ENCODE measurements at regions of chr11 and their contacts with region 1.

Region 1: DNA sequence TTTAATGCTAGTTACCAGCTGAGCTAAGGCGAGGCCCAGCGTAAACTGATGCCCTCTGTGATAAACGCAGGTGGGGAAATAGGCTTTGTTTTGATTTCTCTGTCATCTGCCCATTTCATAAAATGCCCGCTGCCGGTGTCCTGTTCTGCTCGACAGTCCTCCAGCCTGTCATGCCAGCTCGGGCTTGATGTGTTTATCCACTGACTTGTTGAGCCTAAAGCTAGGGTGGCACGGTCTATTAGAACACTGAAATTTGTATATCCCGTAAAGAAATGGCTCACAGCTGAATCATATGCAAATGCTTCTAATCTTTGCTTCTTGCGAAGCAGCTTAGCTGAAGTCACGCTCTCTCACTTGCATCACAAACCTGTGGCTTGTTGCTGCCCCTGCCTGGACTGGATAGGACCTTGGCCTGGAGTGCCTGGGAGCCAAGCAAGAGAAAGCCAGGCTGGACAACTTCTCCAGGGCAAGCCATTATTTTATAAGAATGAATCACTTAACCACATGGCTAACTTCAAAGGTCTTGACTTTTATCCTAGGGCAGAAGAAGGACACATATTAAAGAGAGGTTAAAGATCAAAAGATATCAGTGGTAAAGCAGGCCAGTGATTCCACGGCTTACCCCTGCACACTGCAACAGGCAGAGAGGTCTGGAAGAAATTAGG is 33.1 kb downstream of the EHF start:
- DNase-seq: no peak
- H3K4me3 ChIP-seq: no peak overlapping the region
- H3K27ac ChIP-seq: peak overlapping the region; percentile 30 to 96 (median 89)
- H3K27me3 ChIP-seq: no peaks in the 10 kb centered on the region
- CTCF ChIP-seq: peak in 1 of 56 donors; percentile 4

Region 2: GRCh38 chr11:34546511-34547222 is 107.3 kb before region 1 on chr11:
- intact Hi-C with region 1: no loop called
- DNase-seq: peak in 8 of 10 donors; percentile 35 to 74 (median 50)
- H3K4me3 ChIP-seq: peak overlapping the region in 1 of 59 donors; percentile 4
- H3K27ac ChIP-seq: peak overlapping the region in 49 of 59 donors; percentile 21 to 90 (median 72)
- H3K27me3 ChIP-seq: peaks cover 0 to 5% (median 0%) of the 10 kb centered on the region in 45 donors
- CTCF ChIP-seq: peak in 7 of 56 donors; percentile 10 to 45 (median 15)

Region 3: GRCh38 chr11:34585735-34586487 is 68.0 kb before region 1 on chr11:
- intact Hi-C with region 1: loop called (anchors 2 to 5 kb)
- DNase-seq: no peak
- H3K4me3 ChIP-seq: peak overlapping the region in 35 of 59 donors; percentile 3 to 54 (median 24)
- H3K27ac ChIP-seq: peak overlapping the region in 35 of 59 donors; percentile 1 to 72 (median 37)
- H3K27me3 ChIP-seq: no peaks in the 10 kb centered on the region
- CTCF ChIP-seq: peak; percentile 65 to 95 (median 84)

Region 4: DNA sequence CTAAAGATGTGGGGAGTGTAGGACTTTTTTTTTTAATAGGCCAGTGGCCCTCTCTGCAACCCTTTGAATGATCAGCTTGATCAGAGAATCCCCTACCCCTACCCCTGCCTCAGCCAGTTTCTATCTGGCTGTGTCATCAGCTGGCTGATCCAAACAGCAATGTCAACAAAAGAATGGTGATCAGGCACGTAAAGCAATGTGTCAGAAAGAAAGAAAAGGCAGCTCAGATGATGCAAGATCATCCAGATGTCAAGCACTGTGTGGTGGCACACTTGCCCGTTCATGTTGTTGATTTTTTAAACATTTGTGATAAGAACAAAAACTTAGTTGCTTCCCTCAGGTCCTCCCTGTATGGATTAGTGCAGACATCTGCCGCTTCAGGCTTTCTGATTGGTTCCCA is 59.4 kb before region 1 on chr11:
- intact Hi-C with region 1: loop called (anchors 2 to 5 kb)
- DNase-seq: no peak
- H3K4me3 ChIP-seq: no peak overlapping the region
- H3K27ac ChIP-seq: no peak overlapping the region
- H3K27me3 ChIP-seq: no peaks in the 10 kb centered on the region
- CTCF ChIP-seq: no peak

Region 5: DNA sequence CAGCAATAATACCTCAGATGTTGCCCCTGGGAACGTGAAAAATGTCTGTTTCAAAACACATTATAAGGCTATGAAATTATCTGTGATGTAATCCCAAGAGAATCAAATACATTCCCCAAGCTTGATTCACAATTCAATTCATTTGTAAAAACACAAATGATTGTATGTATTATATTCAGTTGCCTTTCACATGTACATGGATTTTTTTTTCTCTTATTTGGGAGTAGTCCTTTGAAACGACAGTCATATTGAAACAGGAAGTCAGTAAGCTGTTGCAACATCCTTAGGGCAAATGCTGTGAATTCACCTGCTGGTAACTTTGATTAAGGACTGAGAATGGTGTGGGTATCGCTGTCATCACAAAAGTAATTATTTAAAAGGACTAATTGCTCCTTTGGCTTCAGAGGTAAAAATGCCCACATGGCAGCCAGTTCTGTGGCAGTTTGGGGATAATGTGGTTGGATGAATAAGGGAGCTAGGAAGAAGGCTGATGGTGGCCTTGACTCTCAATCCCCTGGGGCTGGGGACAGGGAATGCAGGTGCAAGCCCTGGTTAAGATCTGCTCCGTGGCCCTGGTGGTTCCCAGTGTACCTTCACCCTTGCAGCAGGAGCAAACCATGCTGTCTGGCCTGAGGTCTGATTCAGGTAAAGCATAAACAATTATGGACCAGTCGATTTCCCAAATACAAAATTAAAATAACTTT is 19.8 kb before region 1 on chr11:
- intact Hi-C with region 1: loop called in 1 of 2 experiments (anchors 2 kb)
- DNase-seq: no peak
- H3K4me3 ChIP-seq: no peak overlapping the region
- H3K27ac ChIP-seq: peak overlapping the region in 11 of 59 donors; percentile 4 to 84 (median 46)
- H3K27me3 ChIP-seq: no peaks in the 10 kb centered on the region
- CTCF ChIP-seq: no peak

Region 6: DNA sequence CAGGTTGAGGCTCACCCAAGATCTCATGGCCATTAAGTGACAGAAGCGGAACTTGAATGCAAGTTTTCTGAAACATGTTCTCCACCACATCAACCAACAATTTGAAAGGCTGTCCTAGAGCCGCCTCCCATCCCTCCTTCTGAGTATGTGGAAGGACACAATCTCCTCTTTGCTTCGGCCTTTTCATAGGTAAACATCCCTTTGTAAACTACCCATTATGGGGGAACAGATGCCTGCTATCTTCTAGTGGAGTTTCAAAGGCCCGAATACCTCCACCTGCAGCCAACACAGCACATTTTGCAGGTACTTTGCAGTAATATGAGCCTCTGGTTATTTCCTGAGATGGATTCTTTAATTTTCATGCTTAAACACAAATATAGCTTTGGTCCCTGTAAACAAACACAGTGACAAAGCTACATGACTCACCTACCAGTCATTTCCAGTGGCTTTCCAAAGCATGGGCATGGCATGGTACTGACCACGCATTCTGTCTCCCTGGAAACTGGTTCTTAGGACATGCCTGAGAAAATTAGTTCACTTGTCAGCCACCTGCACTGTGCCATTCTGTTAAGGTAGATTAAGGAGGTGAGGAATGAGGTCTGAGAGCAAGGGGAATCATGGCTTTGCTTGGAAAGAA is 27.1 kb after region 1 on chr11:
- intact Hi-C with region 1: no loop called
- DNase-seq: no peak
- H3K4me3 ChIP-seq: no peak overlapping the region
- H3K27ac ChIP-seq: peak overlapping the region in 5 of 59 donors; percentile 7 to 35 (median 15)
- H3K27me3 ChIP-seq: no peaks in the 10 kb centered on the region
- CTCF ChIP-seq: no peak

Region 7: DNA sequence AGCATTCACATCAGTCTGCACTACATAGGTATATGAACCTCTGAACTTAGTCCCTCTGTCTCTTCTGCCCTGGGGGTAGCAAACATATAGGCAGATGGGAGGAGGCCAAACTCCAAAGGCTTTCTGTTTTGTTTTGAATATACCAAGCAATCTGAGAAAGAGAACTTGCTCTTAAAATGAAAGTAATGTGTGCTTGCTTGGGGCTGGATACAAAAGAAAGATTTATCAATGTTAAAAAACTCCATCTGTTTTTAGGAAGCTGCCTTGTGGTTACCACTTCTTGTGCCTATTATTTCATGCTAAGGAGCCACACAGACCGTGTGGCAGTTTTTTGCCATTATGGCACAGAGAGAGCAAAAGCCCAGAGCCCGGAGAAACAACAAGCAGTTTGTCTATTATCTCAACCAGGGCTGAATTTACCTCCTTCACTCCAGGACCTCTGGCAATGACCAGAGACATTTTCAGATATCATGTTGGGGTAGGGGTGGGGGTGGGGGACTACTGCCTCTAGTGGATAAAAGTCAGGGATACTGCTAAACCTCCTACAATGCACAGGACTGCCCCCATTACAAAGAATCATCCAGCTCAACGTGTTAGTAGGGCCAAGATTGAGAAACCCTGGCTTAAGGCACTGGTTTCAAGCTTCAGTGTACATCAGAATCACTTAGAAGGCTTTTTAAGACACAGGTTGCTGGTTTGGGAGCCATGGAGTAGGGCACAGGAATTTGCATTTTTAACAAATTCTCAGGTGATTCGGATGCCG is 138.0 kb after region 1 on chr11:
- intact Hi-C with region 1: loop called in 1 of 2 experiments (anchors 10 kb)
- DNase-seq: no peak
- H3K4me3 ChIP-seq: no peak overlapping the region
- H3K27ac ChIP-seq: peak overlapping the region in 10 of 59 donors; percentile 3 to 47 (median 18)
- H3K27me3 ChIP-seq: no peaks in the 10 kb centered on the region
- CTCF ChIP-seq: peak in 4 of 56 donors; percentile 5 to 31 (median 19)

Region 8: DNA sequence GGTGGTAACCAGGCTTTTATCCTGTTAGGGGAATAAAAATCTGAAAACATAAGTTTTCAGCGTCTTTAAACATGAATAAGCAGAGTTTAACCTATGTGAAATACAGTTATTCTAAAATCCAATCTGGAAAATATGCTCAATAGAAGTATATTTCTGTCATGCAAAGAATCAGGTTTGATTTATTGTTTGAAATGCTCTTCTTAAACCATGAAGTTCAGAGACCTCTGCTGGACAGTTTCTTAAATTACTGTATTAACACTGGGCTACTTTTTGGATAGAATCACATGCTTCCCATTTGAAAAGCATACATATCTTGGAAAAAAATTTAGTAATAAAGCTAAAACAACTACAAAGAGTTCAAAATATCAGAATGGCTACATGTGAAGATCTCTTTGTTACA is 236.9 kb after region 1 on chr11:
- intact Hi-C with region 1: loop called in 1 of 2 experiments (anchors 5 kb)
- DNase-seq: no peak
- H3K4me3 ChIP-seq: no peak overlapping the region
- H3K27ac ChIP-seq: peak overlapping the region in 8 of 59 donors; percentile 6 to 66 (median 26)
- H3K27me3 ChIP-seq: no peaks in the 10 kb centered on the region
- CTCF ChIP-seq: peak; percentile 39 to 90 (median 72)

Region 9: DNA sequence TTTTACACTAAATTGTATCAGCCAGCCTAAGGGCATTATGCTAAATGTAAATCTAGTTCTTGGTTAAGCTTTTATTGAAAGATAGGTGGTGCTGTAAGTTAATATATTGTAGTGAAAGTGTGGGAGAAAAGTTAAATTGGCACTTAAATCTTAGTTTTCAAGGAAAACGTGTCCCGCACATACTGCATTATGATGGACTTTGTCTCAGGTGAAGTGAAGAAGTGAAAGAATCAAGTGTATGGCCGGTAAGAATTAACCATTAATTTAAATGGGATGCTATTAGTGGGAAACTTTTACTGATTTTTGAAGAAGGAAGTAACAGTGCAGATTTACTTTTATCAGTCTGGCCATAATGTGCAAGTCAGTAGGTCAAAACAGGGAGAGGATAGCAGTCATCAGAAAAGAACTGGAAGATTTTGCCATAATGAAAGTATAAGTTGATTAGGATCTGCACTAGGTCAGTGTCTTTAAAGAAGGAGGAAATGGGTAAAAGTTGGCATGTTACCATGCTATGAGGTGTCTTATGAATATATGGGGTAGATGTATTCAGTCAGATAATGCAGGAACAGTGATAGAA is 344.1 kb after region 1 on chr11:
- intact Hi-C with region 1: no loop called
- DNase-seq: no peak
- H3K4me3 ChIP-seq: no peak overlapping the region
- H3K27ac ChIP-seq: no peak overlapping the region
- H3K27me3 ChIP-seq: no peaks in the 10 kb centered on the region
- CTCF ChIP-seq: peak in 54 of 56 donors; percentile 22 to 77 (median 48)